Gastrocnemius medialis (tissue), 4 donors: ENCODE measurements at regions of chr7 and their contacts with region 1.

Region 1: GRCh38 chr7:50206453-50207250 is 97.9 kb upstream of the IKZF1 start:
- DNase-seq: no peak
- ATAC-seq: no peak
- H3K4me3 ChIP-seq: no peak overlapping the region
- H3K27ac ChIP-seq: no peak overlapping the region
- H3K4me1 ChIP-seq: no peaks in the 10 kb centered on the region
- H3K27me3 ChIP-seq: no peaks in the 10 kb centered on the region
- CTCF ChIP-seq: no peak
- POLR2A ChIP-seq: no peak

Region 2: DNA sequence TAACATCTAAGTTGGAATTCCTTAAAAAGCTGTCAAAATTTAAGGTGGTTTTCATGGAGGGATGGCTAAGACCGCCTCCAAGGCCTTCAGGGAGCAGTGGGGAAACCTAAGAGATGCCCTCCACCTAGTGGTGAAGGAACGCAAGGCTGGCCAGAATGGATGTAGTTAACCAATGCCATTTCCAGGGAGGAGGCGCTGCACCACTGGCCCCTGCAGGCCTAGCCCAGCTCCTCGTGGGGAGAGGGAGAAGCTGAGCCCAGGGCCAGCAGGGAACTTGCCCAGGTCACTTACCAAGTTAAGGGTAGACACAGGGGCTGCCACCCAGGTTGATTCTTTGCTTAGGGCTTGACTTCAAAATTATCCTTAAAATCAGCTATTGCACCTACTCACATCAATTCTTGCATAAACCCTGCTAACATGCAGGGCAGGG is 211.4 kb after region 1 on chr7:
- in situ Hi-C with region 1: loop called in 2 of 4 experiments (anchors 10 to 25 kb)
- intact Hi-C with region 1: loop called (anchors 10 kb)
- DNase-seq: peak; percentile 14 to 39
- ATAC-seq: peak; percentile 44 to 54
- H3K4me3 ChIP-seq: no peak overlapping the region
- H3K27ac ChIP-seq: no peak overlapping the region
- H3K4me1 ChIP-seq: no peaks in the 10 kb centered on the region
- H3K27me3 ChIP-seq: no peaks in the 10 kb centered on the region
- CTCF ChIP-seq: peak in 3 of 5 experiments; percentile 41 to 63 (median 55)
- POLR2A ChIP-seq: no peak

Region 3: DNA sequence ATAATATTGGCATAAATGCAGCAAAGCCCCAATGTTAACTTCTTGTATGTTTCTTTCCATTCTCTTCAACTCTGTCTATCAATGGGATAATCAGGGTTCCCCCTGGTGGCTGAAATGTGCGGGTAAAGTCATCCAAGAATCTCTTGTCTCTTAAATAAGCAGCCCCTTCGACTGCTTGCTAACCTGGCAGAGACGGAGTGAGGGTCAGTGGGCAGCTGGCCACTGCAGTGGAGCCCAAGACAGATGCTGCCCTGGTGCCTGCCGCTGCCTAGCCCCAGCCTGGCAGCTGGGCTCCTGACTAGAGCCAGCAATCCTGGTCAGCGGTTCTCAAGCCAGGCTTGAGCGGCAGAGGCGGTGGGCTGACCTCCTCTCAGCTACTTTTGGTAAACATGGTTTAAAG is 861.1 kb after region 1 on chr7:
- in situ Hi-C with region 1: no loop called
- intact Hi-C with region 1: loop called (anchors 5 kb)
- DNase-seq: peak in 1 of 2 donors; percentile 36
- ATAC-seq: peak; percentile 57 to 58
- H3K4me3 ChIP-seq: no peak overlapping the region
- H3K27ac ChIP-seq: no peak overlapping the region
- H3K4me1 ChIP-seq: peaks cover 6 to 8% of the 10 kb centered on the region in 2 donors
- H3K27me3 ChIP-seq: no peaks in the 10 kb centered on the region
- CTCF ChIP-seq: peak; percentile 58 to 77 (median 72)
- POLR2A ChIP-seq: no peak

Region 4: DNA sequence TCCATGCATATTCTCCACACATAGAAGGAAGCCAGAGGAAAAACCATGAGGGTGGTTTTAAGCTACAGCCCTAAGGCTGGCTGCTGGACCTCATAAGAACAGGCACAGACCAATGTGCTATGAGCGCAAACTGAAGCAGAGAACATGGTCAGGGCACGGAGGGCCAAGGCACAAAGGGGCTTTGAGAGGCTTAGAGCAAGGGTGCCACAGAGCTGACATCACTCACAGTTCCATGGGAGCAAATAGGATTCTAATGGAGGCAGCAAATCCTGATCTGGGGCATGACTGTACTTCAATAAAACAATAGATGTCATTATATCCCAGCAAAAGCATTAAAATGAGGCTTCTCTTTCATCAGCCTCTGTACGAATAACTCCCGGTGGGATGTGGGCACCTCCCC is 947.5 kb after region 1 on chr7:
- in situ Hi-C with region 1: loop called in 2 of 4 experiments (anchors 10 kb)
- intact Hi-C with region 1: no loop called
- DNase-seq: no peak
- ATAC-seq: no peak
- H3K4me3 ChIP-seq: no peak overlapping the region
- H3K27ac ChIP-seq: no peak overlapping the region
- H3K4me1 ChIP-seq: peaks cover 0 to 3% of the 10 kb centered on the region in 2 donors
- H3K27me3 ChIP-seq: no peaks in the 10 kb centered on the region
- CTCF ChIP-seq: no peak
- POLR2A ChIP-seq: no peak